ENCODE measurements at regions of chr20 and their contacts with region 1.

Region 1: GRCh38 chr20:50929299-50930138 is 1.7 kb downstream of the ADNP start:
- DNase-seq: peak; percentile 99
- H3K4me3 Mint-ChIP-seq: peak overlapping the region; percentile 85
- H3K27ac Mint-ChIP-seq: peak overlapping the region; percentile 96
- H3K4me1 Mint-ChIP-seq: peaks cover 48% of the 10 kb centered on the region
- H3K27me3 Mint-ChIP-seq: no peaks in the 10 kb centered on the region

Region 2: DNA sequence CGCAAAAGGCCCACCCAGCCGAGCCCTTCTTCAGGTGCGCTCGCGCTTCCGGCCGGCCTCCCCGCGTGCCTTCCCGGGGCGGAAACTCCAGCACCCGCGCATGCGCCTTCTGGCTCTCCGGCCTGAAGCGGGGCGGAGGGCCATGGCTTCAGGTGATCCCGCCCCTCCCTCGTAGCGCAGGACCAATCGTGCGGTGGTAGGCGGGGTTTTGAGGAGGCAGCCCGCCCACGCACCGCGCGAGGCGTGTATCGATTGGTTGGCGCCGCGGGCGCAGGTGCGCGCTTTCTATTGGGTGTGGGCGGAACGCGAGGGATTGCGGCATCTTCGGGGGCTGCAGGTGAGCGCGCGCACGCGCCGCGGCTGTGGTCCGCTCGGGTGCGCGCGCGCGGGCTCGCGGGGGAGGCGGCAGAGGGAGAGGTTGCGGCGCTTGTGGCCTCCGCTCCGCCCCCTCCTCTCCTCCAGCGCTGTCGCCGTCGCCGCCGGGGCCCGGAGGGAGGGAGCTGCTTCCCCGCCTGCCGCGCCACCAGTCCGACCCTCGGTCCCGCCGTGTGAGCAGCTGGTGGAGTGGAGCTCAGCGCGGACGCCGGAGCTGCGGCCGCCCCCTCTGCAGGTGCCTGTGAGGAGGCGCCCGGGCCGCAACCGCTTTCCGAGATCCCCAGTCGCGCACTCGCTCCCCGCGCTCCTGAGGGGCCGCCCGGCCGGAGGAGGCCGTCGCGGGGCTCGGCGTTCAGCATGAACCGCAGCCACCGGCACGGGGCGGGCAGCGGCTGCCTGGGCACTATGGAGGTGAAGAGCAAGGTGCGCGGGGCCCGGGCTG is 198.3 kb before region 1 on chr20 and contains the start of gene PARD6B:
- CTCF ChIA-PET with region 1: interaction called, 3 read pairs
- intact Hi-C with region 1: loop called (anchors 1 kb)
- DNase-seq: peak; percentile 100
- H3K4me3 Mint-ChIP-seq: peak within 1 kb of the TSS; percentile 86
- H3K27ac Mint-ChIP-seq: peak within 1 kb of the TSS; percentile 70
- H3K4me1 Mint-ChIP-seq: peaks cover 45% of the 10 kb centered on the region
- H3K27me3 Mint-ChIP-seq: no peaks in the 10 kb centered on the region
- total RNA-seq, gene PARD6B: 3.3 to 3.9 TPM

Region 3: GRCh38 chr20:50750145-50750671 is 179.3 kb before region 1 on chr20:
- CTCF ChIA-PET with region 1: no interaction called
- intact Hi-C with region 1: no loop called
- DNase-seq: no peak
- H3K4me3 Mint-ChIP-seq: no peak overlapping the region
- H3K27ac Mint-ChIP-seq: no peak overlapping the region
- H3K4me1 Mint-ChIP-seq: peaks cover 26% of the 10 kb centered on the region
- H3K27me3 Mint-ChIP-seq: no peaks in the 10 kb centered on the region

Region 4: DNA sequence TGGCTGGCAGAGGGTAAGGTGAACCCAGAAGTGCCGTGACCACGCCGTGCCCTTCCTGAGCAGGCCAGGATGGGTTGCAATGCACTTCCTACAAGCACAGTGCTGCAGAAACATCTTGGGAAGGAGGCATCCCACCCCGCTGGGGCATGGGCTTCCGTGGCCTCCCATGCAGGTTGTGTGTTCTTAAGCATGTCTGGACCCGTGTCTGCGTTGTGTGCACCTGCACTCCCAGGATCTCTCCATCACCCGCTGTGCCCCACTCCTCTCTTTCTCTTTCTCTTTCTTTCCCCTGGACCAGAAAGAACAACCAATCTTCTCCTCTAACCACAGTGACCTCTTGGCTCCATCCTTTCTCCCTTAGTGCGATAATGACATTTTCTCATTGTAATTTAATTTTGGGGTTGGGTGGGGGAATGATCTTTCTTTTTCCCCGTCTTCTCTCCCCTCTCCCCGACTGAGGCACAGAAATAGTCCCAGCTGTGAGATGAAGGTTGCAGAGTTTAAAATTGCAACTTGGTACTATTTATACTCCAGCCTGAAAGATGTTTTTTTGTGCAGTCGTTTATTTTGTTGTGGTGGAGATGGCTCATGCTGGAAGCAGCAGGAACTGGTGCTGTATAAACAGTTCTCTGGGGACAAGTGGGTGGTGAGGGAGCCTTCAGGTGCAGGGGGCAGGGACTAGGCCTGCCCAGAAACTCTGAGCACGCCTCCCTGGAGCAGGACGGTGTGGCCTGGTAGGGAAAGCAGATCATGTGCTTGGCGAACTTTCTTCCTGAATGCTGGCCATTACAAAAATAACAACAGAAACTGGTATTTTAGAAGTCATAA is 114.1 kb before region 1 on chr20:
- CTCF ChIA-PET with region 1: interaction called, 11 read pairs
- intact Hi-C with region 1: loop called (anchors 1 kb)
- DNase-seq: peak; percentile 45
- H3K4me3 Mint-ChIP-seq: peak overlapping the region; percentile 59
- H3K27ac Mint-ChIP-seq: peak overlapping the region; percentile 83
- H3K4me1 Mint-ChIP-seq: peaks cover 54% of the 10 kb centered on the region
- H3K27me3 Mint-ChIP-seq: no peaks in the 10 kb centered on the region

Region 5: GRCh38 chr20:50895111-50895830 is 34.2 kb before region 1 on chr20:
- CTCF ChIA-PET with region 1: interaction called, 6 read pairs
- intact Hi-C with region 1: loop called (anchors 2 kb)
- DNase-seq: no peak
- H3K4me3 Mint-ChIP-seq: no peak overlapping the region
- H3K27ac Mint-ChIP-seq: no peak overlapping the region
- H3K4me1 Mint-ChIP-seq: peaks cover 28% of the 10 kb centered on the region
- H3K27me3 Mint-ChIP-seq: no peaks in the 10 kb centered on the region

Region 6: DNA sequence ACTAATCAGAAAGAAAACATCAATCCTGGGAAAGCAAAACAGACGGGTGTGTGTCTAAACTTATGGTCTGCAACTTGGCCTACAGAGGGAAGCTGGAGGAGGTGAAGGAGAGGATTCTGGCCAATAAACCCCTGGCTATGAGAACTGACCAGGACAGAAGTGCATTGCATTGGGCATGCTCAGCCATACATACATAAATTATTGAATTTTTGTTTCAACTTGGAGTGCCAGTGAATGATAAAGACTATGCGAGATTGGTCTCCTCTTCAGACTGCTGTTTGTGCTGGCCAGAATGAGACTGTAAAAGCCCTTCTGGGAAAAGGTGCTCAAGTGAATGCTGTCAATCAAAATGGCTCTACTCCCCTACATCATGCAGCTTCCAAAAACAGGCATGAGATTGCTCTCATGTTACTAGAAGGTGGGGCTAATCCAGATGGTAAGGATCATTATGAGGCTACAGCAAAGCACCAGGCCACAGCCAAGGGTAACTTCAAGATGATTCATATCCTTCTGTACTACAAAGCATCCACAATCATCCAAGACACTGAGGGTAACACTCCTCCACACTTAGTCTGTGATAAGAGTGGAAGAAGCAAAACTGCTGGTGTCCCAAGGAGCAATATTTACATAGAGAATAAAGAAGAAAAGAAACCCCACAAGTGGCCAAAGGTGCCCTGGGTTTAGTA is 15.7 kb before region 1 on chr20:
- CTCF ChIA-PET with region 1: interaction called, 27 read pairs
- intact Hi-C with region 1: loop called (anchors 1 kb)
- DNase-seq: peak; percentile 53
- H3K4me3 Mint-ChIP-seq: no peak overlapping the region
- H3K27ac Mint-ChIP-seq: peak overlapping the region; percentile 80
- H3K4me1 Mint-ChIP-seq: peaks cover 83% of the 10 kb centered on the region
- H3K27me3 Mint-ChIP-seq: no peaks in the 10 kb centered on the region

Region 7: DNA sequence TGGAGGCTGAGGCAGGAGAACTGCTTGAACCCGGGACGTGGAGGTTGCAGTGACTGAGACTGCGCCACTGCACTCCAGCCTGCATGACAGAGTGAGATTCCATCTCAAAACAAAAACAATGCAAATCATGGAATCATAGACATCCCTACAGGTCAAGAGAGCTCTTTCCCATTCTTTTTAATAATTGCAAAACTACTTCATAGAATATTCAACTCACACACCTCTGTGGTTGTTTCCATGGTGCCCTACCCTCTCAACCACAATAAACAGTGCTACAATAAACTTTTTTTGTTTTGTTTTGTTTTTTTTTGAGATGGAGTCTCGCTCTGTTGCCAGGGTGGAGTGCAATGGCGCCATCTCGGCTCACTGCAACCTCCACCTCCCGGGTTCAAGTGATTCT is 13.6 kb after region 1 on chr20:
- CTCF ChIA-PET with region 1: interaction called, 11 read pairs
- intact Hi-C with region 1: no loop called
- DNase-seq: no peak
- H3K4me3 Mint-ChIP-seq: no peak overlapping the region
- H3K27ac Mint-ChIP-seq: no peak overlapping the region
- H3K4me1 Mint-ChIP-seq: no peaks in the 10 kb centered on the region
- H3K27me3 Mint-ChIP-seq: no peaks in the 10 kb centered on the region

Region 8: DNA sequence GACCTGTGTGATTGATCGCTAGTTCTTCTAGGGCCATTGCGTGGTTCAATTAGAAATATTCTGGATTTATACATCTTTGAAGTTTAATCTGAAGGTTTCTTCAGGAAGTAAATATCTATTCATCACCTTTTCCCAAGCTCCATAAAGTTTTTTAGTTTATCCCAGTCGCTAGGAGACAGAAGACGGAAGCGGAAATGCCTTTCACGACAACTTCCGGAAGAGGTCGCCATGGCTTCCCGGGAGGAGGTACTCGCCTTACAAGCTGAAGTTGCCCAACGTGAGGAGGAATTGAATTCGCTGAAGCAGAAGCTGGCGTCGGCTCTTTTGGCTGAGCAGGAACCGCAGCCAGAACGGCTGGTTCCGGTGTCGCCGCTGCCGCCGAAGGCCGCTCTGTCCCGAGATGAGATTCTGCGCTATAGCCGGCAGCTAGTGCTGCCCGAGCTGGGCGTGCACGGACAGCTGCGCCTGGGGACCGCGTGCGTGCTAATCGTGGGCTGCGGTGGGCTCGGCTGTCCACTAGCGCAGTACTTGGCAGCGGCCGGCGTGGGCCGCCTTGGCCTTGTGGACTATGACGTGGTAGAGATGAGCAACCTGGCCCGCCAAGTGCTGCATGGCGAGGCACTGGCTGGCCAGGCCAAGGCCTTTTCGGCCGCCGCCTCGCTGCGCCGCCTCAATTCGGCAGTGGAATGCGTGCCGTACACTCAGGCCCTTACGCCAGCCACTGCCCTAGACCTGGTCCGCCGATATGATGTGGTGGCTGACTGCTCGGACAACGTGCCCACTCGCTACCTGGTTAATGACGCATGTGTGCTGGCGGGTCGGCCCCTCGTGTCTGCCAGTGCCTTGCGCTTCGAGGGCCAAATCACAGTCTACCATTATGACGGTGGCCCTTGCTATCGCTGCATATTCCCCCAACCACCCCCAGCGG is 29.4 kb after region 1 on chr20 and contains the start of gene MOCS3:
- CTCF ChIA-PET with region 1: interaction called, 23 read pairs
- intact Hi-C with region 1: loop called (anchors 1 kb)
- DNase-seq: peak; percentile 86
- H3K4me3 Mint-ChIP-seq: peak within 1 kb of the TSS; percentile 89
- H3K27ac Mint-ChIP-seq: peak within 1 kb of the TSS; percentile 99
- H3K4me1 Mint-ChIP-seq: peaks cover 62% of the 10 kb centered on the region
- H3K27me3 Mint-ChIP-seq: no peaks in the 10 kb centered on the region
- total RNA-seq, gene MOCS3: 1.6 to 2.2 TPM